ENCODE measurements at regions of chr17 and their contacts with region 1.

Region 1: GRCh38 chr17:12180644-12181261 is 160.1 kb downstream of the MAP2K4 start:
- DNase-seq: peak; percentile 35
- H3K4me3 ChIP-seq: no peak overlapping the region
- H3K27ac ChIP-seq: no peak overlapping the region
- H3K4me1 ChIP-seq: no peaks in the 10 kb centered on the region
- H3K27me3 ChIP-seq: no peaks in the 10 kb centered on the region
- CTCF ChIP-seq: peak; percentile 48 to 52
- POLR2A ChIP-seq: no peak

Region 2: DNA sequence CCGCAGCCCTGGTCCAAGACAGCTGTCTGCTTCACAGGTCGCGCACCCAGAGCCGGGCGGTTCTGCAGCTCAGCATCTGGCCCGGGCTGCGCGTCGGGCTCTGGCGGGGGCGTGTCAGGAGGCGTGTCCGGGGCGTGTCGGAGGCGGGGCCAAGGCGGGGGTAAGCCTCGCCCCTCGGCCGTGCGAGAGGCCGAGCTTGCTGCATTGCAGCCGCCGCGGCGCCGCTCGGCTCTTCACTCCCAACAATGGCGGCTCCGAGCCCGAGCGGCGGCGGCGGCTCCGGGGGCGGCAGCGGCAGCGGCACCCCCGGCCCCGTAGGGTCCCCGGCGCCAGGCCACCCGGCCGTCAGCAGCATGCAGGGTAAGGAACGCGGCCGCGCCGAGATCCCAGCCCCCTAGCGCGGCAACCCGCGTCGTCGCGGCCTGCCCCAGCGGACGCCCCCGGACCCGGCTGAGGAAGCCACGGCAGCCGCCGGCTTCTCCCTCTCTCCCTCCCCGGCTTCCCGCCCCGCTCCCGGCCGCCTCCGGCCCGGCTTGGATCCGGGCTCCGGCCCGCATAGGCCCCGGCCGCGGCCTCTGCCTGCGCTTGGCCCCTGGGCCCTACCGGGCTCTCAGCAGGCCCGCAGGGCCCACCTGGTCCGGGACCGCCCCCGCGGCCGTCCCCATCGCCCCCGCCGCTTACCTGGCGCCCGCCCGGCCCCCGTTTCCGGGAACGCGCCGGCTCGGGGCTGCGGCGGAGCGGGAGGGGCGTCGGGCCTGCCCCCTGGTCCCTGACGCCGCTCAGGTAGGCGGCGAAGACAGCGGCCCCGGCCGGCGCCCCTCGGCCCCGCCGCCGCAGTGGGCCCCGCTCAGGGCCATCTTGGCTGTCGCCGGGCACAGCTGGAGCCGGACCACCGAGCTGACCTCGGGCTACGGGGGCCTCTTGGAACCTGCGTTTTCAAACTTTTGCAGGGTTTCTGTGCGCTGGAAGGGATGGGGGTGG is 159.8 kb before region 1 on chr17 and contains the start of gene MAP2K4:
- CTCF ChIA-PET with region 1: no interaction called
- POLR2A ChIA-PET with region 1: no interaction called
- dilution Hi-C with region 1: no loop called
- intact Hi-C with region 1: loop called (anchors 2 kb)
- DNase-seq: peak; percentile 91
- H3K4me3 ChIP-seq: peak within 1 kb of the TSS; percentile 78 to 88 (median 88)
- H3K27ac ChIP-seq: peak within 1 kb of the TSS; percentile 66
- H3K4me1 ChIP-seq: peaks cover 11% of the 10 kb centered on the region
- H3K27me3 ChIP-seq: peaks cover 3 to 5% of the 10 kb centered on the region in 2 experiments
- CTCF ChIP-seq: no peak
- POLR2A ChIP-seq: peak; percentile 84
- total RNA-seq, gene MAP2K4: 17.5 and 21.0 TPM in 2 replicates

Region 3: GRCh38 chr17:12089809-12090384 is 90.9 kb before region 1 on chr17:
- CTCF ChIA-PET with region 1: no interaction called
- POLR2A ChIA-PET with region 1: no interaction called
- dilution Hi-C with region 1: no loop called
- intact Hi-C with region 1: no loop called
- DNase-seq: peak; percentile 79
- H3K4me3 ChIP-seq: peak overlapping the region in 1 of 3 experiments; percentile 7
- H3K27ac ChIP-seq: peak overlapping the region; percentile 68
- H3K4me1 ChIP-seq: peaks cover 16% of the 10 kb centered on the region
- H3K27me3 ChIP-seq: no peaks in the 10 kb centered on the region
- CTCF ChIP-seq: no peak
- POLR2A ChIP-seq: no peak

Region 4: GRCh38 chr17:12250973-12251372 is 70.2 kb after region 1 on chr17:
- CTCF ChIA-PET with region 1: no interaction called
- POLR2A ChIA-PET with region 1: no interaction called
- dilution Hi-C with region 1: no loop called
- intact Hi-C with region 1: no loop called
- DNase-seq: no peak
- H3K4me3 ChIP-seq: no peak overlapping the region
- H3K27ac ChIP-seq: no peak overlapping the region
- H3K4me1 ChIP-seq: no peaks in the 10 kb centered on the region
- H3K27me3 ChIP-seq: no peaks in the 10 kb centered on the region
- CTCF ChIP-seq: no peak
- POLR2A ChIP-seq: no peak

Region 5: GRCh38 chr17:12320286-12320685 is 139.5 kb after region 1 on chr17:
- CTCF ChIA-PET with region 1: no interaction called
- POLR2A ChIA-PET with region 1: no interaction called
- dilution Hi-C with region 1: no loop called
- intact Hi-C with region 1: no loop called
- DNase-seq: no peak
- H3K4me3 ChIP-seq: no peak overlapping the region
- H3K27ac ChIP-seq: no peak overlapping the region
- H3K4me1 ChIP-seq: no peaks in the 10 kb centered on the region
- H3K27me3 ChIP-seq: no peaks in the 10 kb centered on the region
- CTCF ChIP-seq: no peak
- POLR2A ChIP-seq: no peak

Region 6: DNA sequence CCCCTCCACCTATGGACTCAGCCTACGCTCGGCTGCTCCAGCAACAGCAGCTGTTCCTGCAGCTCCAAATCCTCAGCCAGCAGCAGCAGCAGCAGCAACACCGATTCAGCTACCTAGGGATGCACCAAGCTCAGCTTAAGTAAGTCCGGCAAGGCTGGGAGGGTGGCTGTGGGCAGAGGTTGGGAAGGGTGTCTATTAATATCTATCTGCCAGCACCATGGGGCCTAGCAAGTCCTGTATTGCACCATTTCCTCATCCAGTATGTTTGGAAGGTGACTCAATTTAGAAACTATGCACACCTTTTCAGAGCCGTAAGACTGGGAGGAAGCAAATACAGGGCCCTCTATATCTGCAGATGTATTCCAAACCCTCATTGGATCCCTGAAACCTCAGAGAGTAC is 563.5 kb after region 1 on chr17:
- CTCF ChIA-PET with region 1: interaction called, 13 read pairs
- POLR2A ChIA-PET with region 1: no interaction called
- dilution Hi-C with region 1: no loop called
- intact Hi-C with region 1: loop called (anchors 1 kb)
- DNase-seq: no peak
- H3K4me3 ChIP-seq: no peak overlapping the region
- H3K27ac ChIP-seq: no peak overlapping the region
- H3K4me1 ChIP-seq: no peaks in the 10 kb centered on the region
- H3K27me3 ChIP-seq: no peaks in the 10 kb centered on the region
- CTCF ChIP-seq: no peak
- POLR2A ChIP-seq: no peak

Measured in endothelial cell of umbilical vein (primary cell).